Left cardiac atrium (tissue), 4 donors: ENCODE measurements at regions of chr1 and their contacts with region 1.

Region 1: GRCh38 chr1:66253330-66253921 is 280.5 kb upstream of the SGIP1 start:
- DNase-seq: no peak
- ATAC-seq: peak; percentile 90 to 95

Region 2: DNA sequence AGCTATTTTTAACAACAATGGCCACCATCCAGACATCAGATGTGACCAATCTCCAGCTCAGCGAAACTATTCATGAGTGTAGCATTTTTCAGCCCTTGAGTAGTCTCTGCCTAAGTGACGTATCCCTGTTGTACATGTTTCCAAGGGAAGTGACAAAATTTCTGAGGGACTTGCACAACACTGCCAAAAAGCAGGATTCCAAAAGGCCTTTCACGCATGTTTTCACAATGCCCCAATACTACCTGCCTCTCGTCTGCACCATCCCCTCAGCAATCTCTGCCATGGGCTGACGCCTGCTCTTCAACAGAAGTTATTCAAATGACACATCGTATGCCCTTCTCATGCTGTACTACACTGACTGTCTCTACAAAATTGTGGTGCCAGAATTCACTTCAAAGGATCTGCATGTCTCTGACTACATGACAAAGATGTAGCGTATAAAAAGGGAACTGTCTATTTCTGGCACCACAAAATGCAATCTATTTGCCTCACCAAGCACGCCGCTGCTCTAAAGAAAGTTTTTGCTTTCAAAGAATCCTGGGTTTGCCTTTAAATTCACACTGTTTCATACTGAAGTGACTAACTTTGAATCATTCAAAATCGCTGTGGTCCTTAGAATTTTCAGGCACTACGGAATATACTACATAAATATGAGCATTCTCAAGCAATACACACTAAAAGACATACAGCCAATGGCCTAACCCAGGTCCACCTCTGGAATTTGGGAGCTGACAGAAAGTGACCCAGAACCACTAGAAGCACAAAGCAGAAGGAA is 1319.9 kb before region 1 on chr1:
- intact Hi-C with region 1: no loop called
- DNase-seq: no peak
- ATAC-seq: peak; percentile 84 to 88

Region 3: DNA sequence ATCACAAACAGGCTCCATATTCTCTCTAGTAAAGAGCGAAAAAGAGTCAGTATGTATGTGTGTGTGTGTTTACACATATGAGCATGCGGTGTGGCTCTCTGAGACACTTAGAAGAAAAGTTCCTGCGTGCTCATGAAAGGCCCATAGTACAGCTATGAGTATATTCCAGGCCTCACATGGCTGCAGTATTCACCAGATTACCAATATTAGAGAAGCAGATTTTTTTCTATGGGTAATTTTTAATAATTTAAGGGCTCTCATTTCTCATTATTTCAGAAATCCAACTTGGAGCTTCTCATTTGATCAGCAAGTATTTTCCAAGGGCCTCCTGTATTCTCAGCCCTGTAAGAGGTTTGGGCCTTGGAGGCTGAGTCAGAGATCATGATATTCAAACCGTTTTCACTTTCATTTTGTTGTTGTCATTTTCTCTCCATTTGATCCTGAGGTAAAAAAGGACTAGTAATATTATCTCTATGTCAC is 47.6 kb after region 1 on chr1:
- intact Hi-C with region 1: no loop called
- DNase-seq: no peak
- ATAC-seq: peak; percentile 65 to 76

Region 4: GRCh38 chr1:66503841-66504470 is 250.5 kb after region 1 on chr1:
- intact Hi-C with region 1: loop called in 1 of 2 experiments (anchors 2 kb)
- DNase-seq: no peak
- ATAC-seq: peak; percentile 67 to 81

Region 5: DNA sequence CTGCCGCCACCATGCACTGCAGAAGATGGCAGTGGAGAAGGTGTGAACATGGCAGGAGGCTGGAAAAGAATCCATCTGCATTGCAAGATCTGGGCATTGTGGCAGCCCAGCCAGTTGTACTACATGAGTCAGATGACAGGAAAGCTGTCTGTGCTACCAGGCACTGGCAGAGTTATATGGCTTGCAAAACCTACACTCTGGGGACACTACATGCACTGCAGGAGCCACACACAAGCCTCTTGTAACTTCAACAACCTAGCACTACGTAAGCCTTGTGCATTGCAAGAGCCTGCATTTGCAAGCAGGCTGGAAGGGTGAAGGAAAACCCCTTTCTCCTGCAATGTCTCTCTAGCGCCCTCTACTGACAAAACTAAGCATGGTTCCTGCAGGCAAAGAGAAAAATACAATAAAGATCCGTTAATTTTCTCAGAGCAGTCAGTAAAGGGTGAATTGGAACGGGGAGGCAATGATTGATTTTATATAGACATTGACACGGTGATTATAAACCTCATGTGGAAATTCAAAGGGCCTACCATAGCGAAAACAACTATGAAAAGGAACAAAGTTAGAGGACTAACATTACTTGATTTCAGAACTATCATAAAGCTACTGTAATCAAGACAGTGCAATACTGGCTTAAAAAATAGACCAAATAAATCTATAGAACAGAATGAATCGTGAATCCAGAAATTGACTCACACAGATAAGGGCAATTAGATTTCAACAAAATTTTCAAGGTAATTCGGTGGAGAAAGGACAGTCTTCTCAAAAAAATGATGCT is 472.6 kb after region 1 on chr1:
- intact Hi-C with region 1: loop called in 1 of 2 experiments (anchors 10 kb)
- DNase-seq: peak; percentile 24
- ATAC-seq: peak; percentile 83 to 95